Posterior vena cava (tissue), 2 donors: ENCODE measurements at regions of chr10 and their contacts with region 1.

Region 1: DNA sequence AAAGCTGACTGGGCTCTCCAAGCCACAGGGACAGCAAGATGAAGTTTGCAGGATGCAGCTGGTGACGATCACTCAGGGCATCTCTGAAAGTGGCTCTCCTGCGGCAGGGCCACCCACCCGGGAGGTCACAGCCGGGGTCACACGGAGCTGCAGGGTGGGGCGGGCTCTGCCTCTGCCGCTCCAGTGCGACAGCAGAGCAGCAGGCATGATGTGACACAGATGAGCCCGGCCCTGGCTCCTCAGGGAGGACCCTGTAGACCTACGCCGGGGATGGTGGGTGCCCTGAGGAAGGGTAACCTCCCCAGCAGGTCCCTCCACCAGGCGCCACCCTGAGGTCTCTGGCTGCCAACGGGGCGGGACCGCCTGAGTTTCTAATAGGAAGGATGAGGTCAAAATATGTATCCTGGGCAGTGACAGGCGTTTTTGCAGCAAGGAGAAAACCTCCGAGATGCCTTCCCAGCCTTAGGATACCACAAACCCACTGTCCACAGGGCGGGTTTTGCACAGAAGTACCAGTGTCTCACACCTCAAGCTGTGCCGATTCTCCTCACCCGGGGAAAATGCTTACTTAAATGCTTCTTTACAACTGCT is 114.8 kb upstream of the DIP2C start:
- DNase-seq: no peak

Region 2: GRCh38 chr10:588241-589165 is 215.8 kb before region 1 on chr10:
- intact Hi-C with region 1: loop called in 1 of 2 experiments (anchors 10 kb)
- DNase-seq: peak; percentile 78

Region 3: GRCh38 chr10:712089-712488 is 92.2 kb before region 1 on chr10:
- intact Hi-C with region 1: no loop called
- DNase-seq: no peak